ENCODE measurements at regions of chr13 and their contacts with region 1.

Region 1: GRCh38 chr13:75855847-75856246 is 219.7 kb downstream of the LMO7 start:
- DNase-seq: no peak
- ATAC-seq: no peak
- H3K4me3 ChIP-seq: no peak overlapping the region
- H3K4me3 Mint-ChIP-seq: no peak overlapping the region
- H3K27ac ChIP-seq: no peak overlapping the region
- H3K27ac Mint-ChIP-seq: no peak overlapping the region
- H3K4me1 ChIP-seq: no peaks in the 10 kb centered on the region
- H3K4me1 Mint-ChIP-seq: no peaks in the 10 kb centered on the region
- H3K27me3 ChIP-seq: no peaks in the 10 kb centered on the region
- H3K27me3 Mint-ChIP-seq: no peaks in the 10 kb centered on the region
- CTCF ChIP-seq: no peak

Region 2: GRCh38 chr13:74839656-74840055 is 1016.2 kb before region 1 on chr13:
- CTCF ChIA-PET with region 1: no interaction called
- POLR2A ChIA-PET with region 1: no interaction called
- intact Hi-C with region 1: no loop called
- DNase-seq: no peak
- ATAC-seq: no peak
- H3K4me3 ChIP-seq: no peak overlapping the region
- H3K4me3 Mint-ChIP-seq: no peak overlapping the region
- H3K27ac ChIP-seq: no peak overlapping the region
- H3K27ac Mint-ChIP-seq: no peak overlapping the region
- H3K4me1 ChIP-seq: no peaks in the 10 kb centered on the region
- H3K4me1 Mint-ChIP-seq: no peaks in the 10 kb centered on the region
- H3K27me3 ChIP-seq: no peaks in the 10 kb centered on the region
- H3K27me3 Mint-ChIP-seq: peaks cover 3% of the 10 kb centered on the region
- CTCF ChIP-seq: no peak

Region 3: DNA sequence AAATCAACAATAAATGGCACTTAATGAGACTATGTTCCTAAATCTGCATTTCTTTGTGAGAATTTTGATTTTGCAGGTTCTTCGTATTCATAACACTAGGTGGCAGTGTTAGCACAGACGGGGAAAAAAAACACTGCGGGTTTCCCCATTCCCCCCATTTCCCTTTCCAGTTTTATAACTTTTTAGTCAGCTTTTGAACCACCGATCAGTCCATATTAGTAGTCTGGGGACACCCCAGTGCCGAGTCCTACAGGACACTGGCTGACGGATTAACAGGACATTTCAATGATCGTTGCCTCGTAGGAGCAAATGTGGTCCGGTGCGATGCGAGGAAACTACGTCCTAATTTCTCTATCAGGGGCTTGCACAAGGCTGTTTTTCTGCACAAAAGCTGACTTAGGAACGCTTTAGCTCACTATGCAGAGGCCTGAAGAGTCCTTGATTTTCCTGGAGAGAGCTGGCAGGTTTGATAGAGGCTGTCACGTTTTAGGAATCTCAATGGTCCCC is 14.6 kb after region 1 on chr13:
- CTCF ChIA-PET with region 1: interaction called, 17 read pairs
- POLR2A ChIA-PET with region 1: no interaction called
- intact Hi-C with region 1: no loop called
- DNase-seq: peak in 4 of 9 experiments; percentile 3 to 54 (median 18)
- ATAC-seq: peak; percentile 62
- H3K4me3 ChIP-seq: peak overlapping the region; percentile 3 to 29
- H3K4me3 Mint-ChIP-seq: peak overlapping the region; percentile 76
- H3K27ac ChIP-seq: peak overlapping the region in 1 of 2 experiments; percentile 0
- H3K27ac Mint-ChIP-seq: peak overlapping the region; percentile 62
- H3K4me1 ChIP-seq: no peaks in the 10 kb centered on the region
- H3K4me1 Mint-ChIP-seq: peaks cover 17% of the 10 kb centered on the region
- H3K27me3 ChIP-seq: no peaks in the 10 kb centered on the region
- H3K27me3 Mint-ChIP-seq: peaks cover 5% of the 10 kb centered on the region
- CTCF ChIP-seq: peak; percentile 89